ENCODE measurements at regions of chr9 and their contacts with region 1.

Region 1: GRCh38 chr9:135085830-135086546 is 1.5 kb upstream of the OLFM1 start:
- DNase-seq: peak; percentile 92
- ATAC-seq: peak; percentile 62
- H3K4me3 Mint-ChIP-seq: peak overlapping the region; percentile 73
- H3K27ac Mint-ChIP-seq: no peak overlapping the region; the same call in 1 of the 2 replicates
- H3K4me1 Mint-ChIP-seq: peaks cover 24% of the 10 kb centered on the region
- H3K27me3 Mint-ChIP-seq: peaks cover 25% of the 10 kb centered on the region
- CTCF ChIP-seq: peak; percentile 84

Region 2: DNA sequence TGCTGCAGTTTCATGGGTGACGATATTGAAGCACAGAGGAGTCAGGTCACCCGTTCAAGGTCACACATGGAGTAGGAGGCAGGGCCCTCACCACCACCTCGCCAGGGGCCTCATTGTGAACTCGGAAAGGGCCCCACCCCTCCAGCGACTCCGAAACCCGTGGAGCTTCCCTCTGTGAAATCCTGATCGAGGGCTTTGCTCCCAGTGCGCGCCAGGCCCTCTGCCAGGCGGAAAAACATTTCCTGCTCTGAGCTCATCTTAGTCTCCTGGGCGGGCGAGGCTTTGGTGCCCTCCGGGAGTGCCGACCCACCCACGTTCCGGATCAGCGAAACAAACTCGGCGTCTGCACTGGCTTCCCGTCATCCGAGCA is 93.2 kb before region 1 on chr9:
- CTCF ChIA-PET with region 1: no interaction called
- POLR2A ChIA-PET with region 1: no interaction called
- DNase-seq: no peak
- ATAC-seq: no peak
- H3K4me3 Mint-ChIP-seq: no peak overlapping the region
- H3K27ac Mint-ChIP-seq: no peak overlapping the region
- H3K4me1 Mint-ChIP-seq: peaks cover 9% of the 10 kb centered on the region
- H3K27me3 Mint-ChIP-seq: peaks cover 7% of the 10 kb centered on the region
- CTCF ChIP-seq: no peak

Region 3: DNA sequence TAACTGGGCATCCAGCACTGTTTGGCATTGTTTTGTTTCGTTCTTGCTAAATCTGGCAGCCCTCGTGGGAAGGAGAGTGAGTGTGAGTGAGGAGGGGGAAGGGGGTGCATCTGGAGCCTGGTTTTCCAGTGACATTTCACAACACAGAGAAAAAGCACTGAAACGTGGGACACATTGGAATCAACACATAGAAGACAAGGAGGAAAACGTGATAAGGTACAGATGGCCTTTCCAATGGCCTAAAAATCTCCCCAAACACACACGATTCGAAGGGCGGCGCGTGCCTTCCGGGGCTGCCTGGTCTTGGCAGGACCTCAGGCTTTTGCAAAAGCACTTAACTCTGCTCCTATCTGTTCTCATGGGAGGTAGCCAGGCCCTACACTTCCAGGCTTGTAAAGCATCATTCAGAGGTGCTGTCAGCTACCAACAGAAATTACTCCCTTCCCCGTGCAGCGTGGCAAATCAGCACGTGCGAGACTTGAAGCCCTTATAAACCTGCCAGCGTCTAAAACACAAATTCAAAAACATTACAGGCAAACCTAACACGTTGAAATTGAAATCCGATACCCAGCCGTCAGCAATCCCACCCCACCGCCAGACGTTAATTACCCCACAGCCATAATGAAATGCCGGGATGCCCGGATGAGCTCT is 130.9 kb after region 1 on chr9:
- CTCF ChIA-PET with region 1: interaction called, 24 read pairs
- POLR2A ChIA-PET with region 1: no interaction called
- DNase-seq: peak; percentile 9
- ATAC-seq: no peak
- H3K4me3 Mint-ChIP-seq: peak overlapping the region; percentile 1; the same call in 1 of the 2 replicates
- H3K27ac Mint-ChIP-seq: peak overlapping the region; percentile 37; the same call in 1 of the 2 replicates
- H3K4me1 Mint-ChIP-seq: peaks cover 34% of the 10 kb centered on the region
- H3K27me3 Mint-ChIP-seq: no peaks in the 10 kb centered on the region
- CTCF ChIP-seq: no peak

Region 4: GRCh38 chr9:135273008-135273407 is 187.0 kb after region 1 on chr9:
- CTCF ChIA-PET with region 1: no interaction called
- POLR2A ChIA-PET with region 1: no interaction called
- DNase-seq: no peak
- ATAC-seq: no peak
- H3K4me3 Mint-ChIP-seq: no peak overlapping the region
- H3K27ac Mint-ChIP-seq: no peak overlapping the region
- H3K4me1 Mint-ChIP-seq: no peaks in the 10 kb centered on the region
- H3K27me3 Mint-ChIP-seq: no peaks in the 10 kb centered on the region; the same call in none of the 2 replicates
- CTCF ChIP-seq: no peak

Region 5: DNA sequence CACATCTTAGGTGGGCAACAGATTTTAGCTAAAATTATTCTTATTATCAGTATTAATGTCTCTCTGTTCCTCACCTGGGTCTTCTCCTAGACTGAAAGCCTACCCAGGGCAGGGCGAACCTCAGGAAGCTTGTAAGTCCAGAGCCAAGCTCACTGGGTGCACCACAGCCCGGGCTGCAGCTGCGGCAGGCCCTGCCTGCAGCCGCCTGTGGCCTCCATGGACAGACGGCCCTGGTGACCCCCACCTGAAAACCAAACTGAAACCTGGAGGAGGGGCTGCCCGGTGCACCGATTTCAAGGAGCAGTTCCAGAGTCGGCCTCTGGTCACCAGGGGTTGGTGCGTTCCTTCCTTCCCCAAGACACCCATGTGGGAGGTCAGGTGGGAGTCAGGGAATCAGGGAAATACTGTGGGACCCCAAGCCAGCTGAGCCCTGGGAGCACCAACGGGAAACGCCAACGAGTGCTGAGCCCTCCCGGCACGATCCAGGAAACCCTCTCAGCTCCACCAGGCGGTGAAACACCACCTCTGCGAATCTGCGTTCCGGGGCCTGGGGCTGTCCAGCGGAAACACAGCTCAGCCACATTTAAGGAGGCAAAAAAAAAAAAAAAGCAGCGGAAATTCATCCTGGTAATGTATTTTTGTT is 325.0 kb after region 1 on chr9:
- CTCF ChIA-PET with region 1: interaction called, 46 read pairs
- POLR2A ChIA-PET with region 1: no interaction called
- DNase-seq: peak; percentile 36
- ATAC-seq: peak; percentile 40
- H3K4me3 Mint-ChIP-seq: no peak overlapping the region
- H3K27ac Mint-ChIP-seq: no peak overlapping the region
- H3K4me1 Mint-ChIP-seq: no peaks in the 10 kb centered on the region
- H3K27me3 Mint-ChIP-seq: no peaks in the 10 kb centered on the region
- CTCF ChIP-seq: no peak

Measured in WTC11 (cell line).